Right ventricle myocardium inferior (tissue), 1 donor: ENCODE measurements at regions of chr19 and their contacts with region 1.

Region 1: GRCh38 chr19:40403262-40403984 is 9.8 kb downstream of the PRX start:
- DNase-seq: peak; percentile 95
- ATAC-seq: peak; percentile 95

Region 2: GRCh38 chr19:40348125-40348913 is 55.1 kb before region 1 on chr19 and contains the starts of genes C19orf47 and PLD3:
- intact Hi-C with region 1: loop called (anchors 1 kb)
- DNase-seq: peak; percentile 100
- ATAC-seq: peak; percentile 99
- total RNA-seq, gene C19orf47: 222 TPM
- total RNA-seq, gene PLD3: 169 TPM

Region 3: DNA sequence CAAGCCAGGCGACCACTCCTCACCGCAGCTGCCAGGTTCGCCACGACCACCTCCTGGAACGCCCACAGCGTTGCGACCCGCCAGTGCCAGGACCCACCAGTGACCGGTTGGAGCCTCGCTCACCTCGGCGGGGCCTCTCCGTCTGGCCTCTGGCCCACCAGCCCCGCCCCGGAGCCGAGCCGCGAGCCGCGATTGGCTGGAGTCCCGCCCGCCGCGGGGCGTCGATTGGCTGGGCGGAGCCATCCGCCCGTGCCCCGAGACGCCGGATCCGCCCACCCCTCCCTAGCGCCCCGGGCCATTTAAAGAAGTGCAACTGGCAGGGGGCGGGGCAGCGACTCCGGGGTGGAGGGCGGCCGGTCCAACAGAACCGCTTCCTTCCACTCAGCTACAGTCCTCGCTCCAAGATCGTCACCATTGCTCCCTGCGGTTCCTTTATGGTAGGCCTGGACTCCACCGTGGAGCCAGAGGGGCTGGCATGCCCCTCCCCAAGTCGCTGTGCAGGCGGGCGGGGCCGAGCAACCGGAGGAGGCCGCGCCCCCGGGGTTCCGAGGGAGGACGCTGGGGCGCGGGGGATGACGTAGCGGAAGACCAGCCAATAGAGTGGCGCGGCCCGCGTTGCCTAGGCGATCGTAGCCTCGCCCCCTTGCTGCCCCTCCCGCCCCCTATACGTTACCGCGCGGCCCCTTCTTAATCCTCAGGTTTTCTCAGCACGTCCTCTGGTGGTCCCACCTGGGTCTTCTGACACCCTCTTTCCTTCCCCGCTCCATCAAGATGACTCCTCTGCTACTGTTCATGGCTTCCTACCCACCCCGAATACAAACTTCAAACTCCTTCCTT is 41.0 kb after region 1 on chr19 and contains the start of gene SERTAD3:
- intact Hi-C with region 1: loop called (anchors 1 kb)
- DNase-seq: peak; percentile 99
- ATAC-seq: peak; percentile 84
- total RNA-seq, gene SERTAD3: 28.2 TPM

Region 4: DNA sequence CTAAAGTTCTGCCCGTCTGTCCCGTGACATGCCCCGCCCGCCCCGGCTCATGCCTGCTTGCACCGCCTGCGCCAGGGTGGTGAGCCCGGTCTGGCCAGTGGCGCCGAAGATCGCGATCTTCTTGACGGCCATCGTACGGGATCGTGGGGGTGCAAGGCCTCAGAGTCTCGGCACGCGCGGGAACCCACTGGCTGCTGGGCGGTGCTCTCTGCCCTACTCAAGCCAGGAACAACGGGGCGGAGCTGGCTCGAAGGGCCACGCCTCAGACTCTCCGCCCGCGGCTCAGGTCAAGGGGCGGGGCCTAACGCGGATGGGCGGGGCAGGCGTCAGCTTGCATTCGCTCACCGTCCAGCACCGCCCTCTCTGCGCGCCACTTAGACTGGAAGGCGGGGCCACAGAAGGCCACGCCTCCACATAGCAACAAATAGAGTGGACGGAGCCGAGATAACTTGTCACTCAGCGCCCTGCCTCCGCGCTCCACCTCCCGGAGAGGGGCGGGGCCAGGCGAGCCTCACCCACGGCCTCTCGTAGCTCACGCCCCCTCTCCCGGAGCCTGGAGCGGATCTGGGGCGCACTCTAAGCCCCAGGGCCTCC is 62.2 kb after region 1 on chr19 and contains the start of gene BLVRB:
- intact Hi-C with region 1: loop called (anchors 5 kb)
- DNase-seq: peak; percentile 100
- ATAC-seq: peak; percentile 97
- total RNA-seq, gene BLVRB: 127 TPM

Region 5: GRCh38 chr19:40512473-40513344 is 109.3 kb after region 1 on chr19:
- intact Hi-C with region 1: no loop called
- DNase-seq: no peak
- ATAC-seq: peak; percentile 54

Region 6: GRCh38 chr19:40609561-40610395 is 206.4 kb after region 1 on chr19:
- intact Hi-C with region 1: no loop called
- DNase-seq: peak; percentile 91
- ATAC-seq: peak; percentile 59